BJ (cell line): ENCODE measurements at regions of chr3 and their contacts with region 1.

Region 1: GRCh38 chr3:45929042-45929679 is 14.1 kb upstream of the CXCR6 start:
- DNase-seq: no peak
- H3K4me3 ChIP-seq: no peak overlapping the region
- H3K27me3 ChIP-seq: no peaks in the 10 kb centered on the region
- CTCF ChIP-seq: peak; percentile 87

Region 2: GRCh38 chr3:45841757-45842491 is 87.2 kb before region 1 on chr3 and contains the start of gene LZTFL1:
- CTCF ChIA-PET with region 1: interaction called, 10 read pairs
- POLR2A ChIA-PET with region 1: no interaction called
- DNase-seq: peak; percentile 88
- H3K4me3 ChIP-seq: peak within 1 kb of the TSS; percentile 71
- H3K27me3 ChIP-seq: no peaks in the 10 kb centered on the region
- CTCF ChIP-seq: no peak
- polyA plus RNA-seq, gene LZTFL1: 12.9 and 24.7 TPM in 2 replicates

Region 3: DNA sequence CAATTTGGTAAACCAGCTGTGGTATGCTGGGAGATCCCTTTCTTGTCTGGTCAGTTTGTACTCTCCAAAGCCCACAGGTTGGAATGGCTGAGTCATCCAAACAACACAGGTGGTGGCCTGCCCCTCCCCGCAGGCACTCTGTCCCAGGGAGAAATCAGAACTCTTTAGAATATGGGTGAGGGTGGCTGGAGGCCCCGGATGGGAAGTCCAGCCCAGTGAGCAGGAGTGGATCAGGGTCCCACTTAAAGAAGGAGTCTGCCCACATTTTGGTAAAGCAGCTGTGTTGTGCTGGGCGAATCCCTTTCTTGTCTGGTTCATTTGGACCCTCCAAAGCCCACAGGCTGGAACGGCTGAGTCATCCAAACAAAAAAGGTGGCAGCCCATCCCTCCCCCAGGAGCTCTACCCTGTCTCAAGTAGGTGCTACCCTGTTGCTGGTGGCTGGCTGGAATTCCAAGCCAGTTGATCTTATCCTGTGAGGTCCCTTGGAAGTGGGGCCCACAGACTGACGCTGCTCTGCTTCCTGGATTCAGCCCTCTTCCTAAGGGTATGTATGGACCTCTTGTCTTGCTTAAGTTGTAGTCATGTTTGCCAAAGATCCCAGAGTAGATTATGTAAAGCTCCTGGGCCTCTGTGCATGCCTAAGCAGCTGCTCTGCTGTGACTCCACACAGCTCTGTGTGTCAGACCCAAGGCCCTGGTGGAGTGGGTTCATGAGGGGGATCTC is 234.3 kb after region 1 on chr3:
- CTCF ChIA-PET with region 1: no interaction called
- POLR2A ChIA-PET with region 1: no interaction called
- DNase-seq: no peak
- H3K4me3 ChIP-seq: no peak overlapping the region
- H3K27me3 ChIP-seq: no peaks in the 10 kb centered on the region
- CTCF ChIP-seq: no peak